ENCODE measurements at regions of chr1 and their contacts with region 1.

Region 1: GRCh38 chr1:3069491-3070303 is 694 bp downstream of the PRDM16 start:
- DNase-seq: peak; percentile 49
- H3K4me3 ChIP-seq: peak overlapping the region; percentile 61 to 69
- H3K27ac ChIP-seq: peak overlapping the region; percentile 26 to 52
- H3K4me1 ChIP-seq: peaks cover 12% of the 10 kb centered on the region
- H3K27me3 ChIP-seq: peaks cover 51% of the 10 kb centered on the region
- CTCF ChIP-seq: peak in 3 of 4 experiments; percentile 14 to 47 (median 42)
- POLR2A ChIP-seq: no peak

Region 2: GRCh38 chr1:3222042-3222692 is 152.5 kb after region 1 on chr1:
- intact Hi-C with region 1: loop called (anchors 10 kb)
- DNase-seq: no peak
- H3K4me3 ChIP-seq: no peak overlapping the region
- H3K27ac ChIP-seq: no peak overlapping the region
- H3K4me1 ChIP-seq: no peaks in the 10 kb centered on the region
- H3K27me3 ChIP-seq: peaks cover 3% of the 10 kb centered on the region
- CTCF ChIP-seq: no peak
- POLR2A ChIP-seq: no peak

Region 3: DNA sequence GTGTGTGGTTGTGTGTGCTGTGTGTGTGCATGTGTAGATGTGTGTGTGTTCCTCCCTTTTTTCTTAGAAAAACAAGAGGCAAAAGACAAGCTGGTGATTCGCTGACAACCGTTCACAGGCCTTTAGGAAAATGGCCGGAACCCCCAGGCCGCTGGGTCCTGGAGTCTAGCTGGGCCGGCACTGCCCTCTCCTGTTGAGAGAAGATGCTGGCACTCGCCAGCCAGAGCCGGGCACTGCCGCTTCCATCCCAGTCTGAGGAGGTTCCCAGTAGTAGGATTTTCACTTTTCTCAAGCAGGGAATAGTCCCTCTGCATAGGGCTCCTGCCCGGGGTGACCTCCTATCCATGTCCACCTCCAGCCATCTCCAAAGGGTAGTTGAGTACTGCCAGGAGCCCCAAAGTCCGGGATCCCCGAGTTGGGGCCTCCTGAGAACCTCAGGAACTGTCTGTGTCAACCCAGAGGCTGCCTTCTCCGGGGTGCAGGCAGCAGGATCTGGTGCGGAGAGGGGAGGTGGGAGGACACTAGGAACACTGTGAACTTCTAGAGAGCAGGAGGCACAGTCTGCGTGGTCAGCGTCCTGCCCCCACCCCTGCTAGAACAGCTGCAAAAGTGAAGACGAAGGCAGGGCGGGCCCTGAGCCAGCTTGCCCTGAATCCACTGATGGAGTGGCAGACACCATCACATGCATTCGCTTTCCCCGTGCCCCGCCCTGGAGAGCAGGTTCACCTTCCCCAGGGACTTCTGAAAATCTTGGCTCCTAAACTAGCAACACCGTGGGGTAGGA is 340.6 kb after region 1 on chr1:
- intact Hi-C with region 1: loop called (anchors 2 kb)
- DNase-seq: peak; percentile 62
- H3K4me3 ChIP-seq: no peak overlapping the region
- H3K27ac ChIP-seq: no peak overlapping the region
- H3K4me1 ChIP-seq: no peaks in the 10 kb centered on the region
- H3K27me3 ChIP-seq: peaks cover 31% of the 10 kb centered on the region
- CTCF ChIP-seq: peak; percentile 39 to 83 (median 76)
- POLR2A ChIP-seq: no peak

Measured in prostate gland (tissue), 2 donors.